ENCODE measurements at regions of chr2 and their contacts with region 1.

Region 1: DNA sequence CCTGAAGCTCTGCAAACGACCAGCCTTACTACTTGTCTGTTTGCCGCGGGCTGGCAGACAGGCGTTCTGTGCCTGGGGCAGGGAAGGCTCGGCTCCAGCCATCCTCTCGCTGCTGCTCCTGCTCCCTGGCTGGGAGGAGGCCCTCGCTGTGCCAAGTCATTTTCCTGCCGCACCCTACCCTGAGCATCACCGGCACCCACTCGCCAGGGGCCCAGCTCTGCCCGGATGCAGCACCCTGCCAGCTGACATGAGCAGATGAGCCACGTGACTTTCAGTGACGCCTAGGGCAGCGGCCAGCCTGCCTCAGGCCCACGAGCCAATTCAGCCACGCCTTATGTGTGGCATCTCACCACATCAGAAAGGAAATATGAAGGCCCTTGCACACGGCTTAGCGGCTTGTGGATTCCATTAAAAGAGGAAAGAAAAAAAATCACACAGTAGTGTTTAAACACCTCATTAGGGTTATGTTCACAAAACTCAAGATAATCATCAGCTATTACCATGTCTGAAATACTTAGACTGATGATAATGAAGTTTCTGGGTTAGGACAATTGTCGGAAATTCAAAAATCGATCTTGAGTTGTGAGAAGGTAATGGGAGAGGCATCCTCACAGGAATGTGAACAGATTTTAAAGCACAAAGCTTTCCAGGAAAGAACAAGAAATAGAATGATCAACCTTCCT is 250.5 kb downstream of the TWIST2 start:
- DNase-seq: no peak
- H3K4me3 Mint-ChIP-seq: no peak overlapping the region
- H3K27ac Mint-ChIP-seq: no peak overlapping the region
- H3K4me1 Mint-ChIP-seq: no peaks in the 10 kb centered on the region
- H3K27me3 Mint-ChIP-seq: no peaks in the 10 kb centered on the region
- CTCF ChIP-seq: no peak

Region 2: GRCh38 chr2:238573065-238573778 is 525.2 kb before region 1 on chr2:
- CTCF ChIA-PET with region 1: no interaction called
- intact Hi-C with region 1: no loop called
- DNase-seq: peak; percentile 54
- H3K4me3 Mint-ChIP-seq: no peak overlapping the region
- H3K27ac Mint-ChIP-seq: no peak overlapping the region
- H3K4me1 Mint-ChIP-seq: no peaks in the 10 kb centered on the region
- H3K27me3 Mint-ChIP-seq: no peaks in the 10 kb centered on the region
- CTCF ChIP-seq: peak; percentile 85

Region 3: DNA sequence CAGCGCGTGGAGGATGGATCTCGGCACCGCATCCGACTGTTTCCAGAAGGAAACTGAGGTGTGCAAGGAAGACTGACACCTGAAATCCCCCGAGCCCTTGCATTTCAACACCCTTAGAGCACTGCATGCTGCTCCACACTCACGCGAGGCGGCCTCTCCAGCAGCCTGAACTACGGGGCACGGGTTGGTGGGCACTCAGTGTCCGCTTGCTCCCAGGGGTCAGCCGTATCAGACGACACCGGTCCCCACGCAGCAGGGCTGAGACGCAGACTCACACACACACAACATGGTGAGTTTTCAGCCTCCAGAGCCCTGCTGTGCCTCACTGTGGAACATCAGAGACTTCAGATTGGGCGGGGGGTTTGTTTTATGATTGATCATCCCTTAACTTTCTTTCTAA is 19.4 kb after region 1 on chr2:
- CTCF ChIA-PET with region 1: interaction called, 10 read pairs
- intact Hi-C with region 1: no loop called
- DNase-seq: no peak
- H3K4me3 Mint-ChIP-seq: no peak overlapping the region
- H3K27ac Mint-ChIP-seq: no peak overlapping the region
- H3K4me1 Mint-ChIP-seq: no peaks in the 10 kb centered on the region
- H3K27me3 Mint-ChIP-seq: no peaks in the 10 kb centered on the region
- CTCF ChIP-seq: no peak

Region 4: DNA sequence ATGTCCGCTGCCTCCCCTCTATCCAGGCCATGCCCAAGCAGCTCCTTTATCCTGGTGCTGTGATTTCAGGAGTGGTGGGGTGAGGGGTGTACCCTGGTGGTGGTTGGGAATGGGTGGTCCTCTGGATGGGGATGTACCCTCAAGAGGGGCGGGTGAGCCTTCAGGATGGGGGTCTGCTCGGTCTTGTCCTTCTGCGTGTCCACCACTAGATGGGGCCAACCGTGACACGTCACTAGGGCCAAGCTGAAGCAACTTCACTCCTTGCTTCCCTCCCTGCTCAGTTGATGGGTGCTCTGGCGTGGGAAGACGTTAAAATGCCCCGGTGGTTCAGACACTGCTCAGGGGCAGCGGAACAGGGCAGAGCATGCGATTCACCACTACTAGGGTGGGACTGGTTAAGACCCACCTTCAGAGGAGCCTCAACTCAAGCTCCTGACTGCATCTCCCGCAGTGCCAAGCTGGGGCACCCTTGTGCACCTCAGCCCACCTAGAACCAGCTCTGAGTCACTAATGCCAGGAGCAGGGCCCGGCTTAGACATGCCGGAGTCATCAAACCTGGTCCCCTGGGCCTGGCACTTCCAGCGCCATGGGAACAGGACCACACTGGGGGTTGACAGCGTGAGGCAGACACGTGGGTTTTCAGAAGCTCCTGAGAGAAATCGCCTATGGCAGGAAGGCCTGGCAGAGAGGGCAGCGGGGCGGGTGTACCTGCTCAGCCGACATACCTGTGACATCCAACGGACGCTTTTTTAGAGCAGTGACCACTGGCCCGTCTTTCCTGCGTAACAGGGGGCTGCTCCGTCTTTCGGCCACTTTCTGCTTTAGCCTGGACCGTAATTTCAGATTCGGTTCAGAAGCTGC is 45.7 kb after region 1 on chr2:
- CTCF ChIA-PET with region 1: no interaction called
- intact Hi-C with region 1: no loop called
- DNase-seq: peak; percentile 27
- H3K4me3 Mint-ChIP-seq: no peak overlapping the region
- H3K27ac Mint-ChIP-seq: no peak overlapping the region
- H3K4me1 Mint-ChIP-seq: no peaks in the 10 kb centered on the region
- H3K27me3 Mint-ChIP-seq: no peaks in the 10 kb centered on the region
- CTCF ChIP-seq: peak; percentile 60

Region 5: DNA sequence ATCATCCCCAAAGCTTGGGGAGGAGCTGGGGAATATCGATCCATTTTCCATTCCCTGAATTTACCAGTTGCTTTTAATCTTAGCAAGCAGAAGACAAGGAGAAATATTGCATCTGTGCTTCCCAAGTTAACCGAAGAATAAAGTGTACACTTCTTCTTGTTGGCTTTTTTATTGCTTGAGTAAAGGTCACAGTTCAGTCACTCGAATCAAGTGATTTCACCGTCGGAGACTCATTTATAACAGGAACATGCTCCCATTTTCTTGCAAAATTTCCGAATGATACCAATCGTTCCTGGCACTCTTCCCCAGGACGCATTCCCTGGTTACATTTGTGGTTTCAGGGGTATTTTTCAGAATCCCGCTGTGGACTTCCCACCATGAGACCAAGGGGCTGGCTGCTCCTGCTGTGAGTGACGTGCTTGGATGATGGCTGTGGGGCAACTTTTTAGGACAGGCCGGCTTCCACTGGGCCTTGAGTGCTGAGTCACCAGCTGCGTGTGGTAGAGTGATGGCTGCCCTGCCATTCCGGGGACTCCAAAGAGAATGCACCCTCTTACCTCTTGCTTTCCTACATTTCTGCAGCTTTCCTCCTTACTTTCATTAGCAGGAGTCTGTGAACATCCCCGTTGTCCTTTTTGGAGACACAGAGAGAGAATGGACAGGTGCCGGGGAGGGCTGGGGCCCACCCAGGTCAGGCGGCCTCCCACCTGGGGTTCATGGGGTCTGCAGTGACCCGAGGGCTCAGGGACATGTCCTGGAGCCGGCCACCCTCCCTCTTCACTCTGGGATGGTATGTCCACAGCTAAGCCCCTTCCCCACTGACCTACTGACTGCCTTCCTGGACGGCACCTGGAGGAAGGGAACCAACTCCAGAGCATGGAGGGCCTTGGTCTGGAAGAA is 363.1 kb after region 1 on chr2:
- CTCF ChIA-PET with region 1: no interaction called
- intact Hi-C with region 1: no loop called
- DNase-seq: no peak
- H3K4me3 Mint-ChIP-seq: no peak overlapping the region
- H3K27ac Mint-ChIP-seq: no peak overlapping the region
- H3K4me1 Mint-ChIP-seq: no peaks in the 10 kb centered on the region
- H3K27me3 Mint-ChIP-seq: peaks cover 49% of the 10 kb centered on the region
- CTCF ChIP-seq: no peak